ENCODE measurements at regions of chr2 and their contacts with region 1.

Region 1: DNA sequence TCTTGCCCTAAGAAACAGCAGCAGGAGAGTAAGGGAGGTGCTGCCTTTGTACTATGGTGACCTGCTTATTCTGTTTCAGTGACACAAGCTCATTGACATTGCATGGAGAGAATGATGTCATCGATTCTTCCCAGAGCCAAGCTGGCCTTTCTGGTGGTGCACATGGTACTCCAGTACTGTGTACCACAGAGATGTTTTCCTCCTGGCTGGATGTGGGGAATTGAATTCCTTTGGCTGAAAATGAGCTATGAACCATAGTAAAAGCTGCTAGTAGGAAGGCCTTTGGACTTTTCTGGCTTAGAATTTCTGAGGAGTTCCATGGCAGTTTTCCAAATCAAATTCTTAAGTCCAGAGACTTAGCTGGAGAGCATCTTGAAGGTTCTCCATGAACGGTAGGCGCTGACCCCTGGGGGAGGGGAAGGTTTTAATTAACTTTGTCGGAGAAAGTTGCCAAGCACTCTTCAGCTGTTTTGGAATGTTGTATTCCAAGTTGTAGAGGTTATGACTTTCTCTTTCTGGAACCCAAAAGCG is 17.1 kb upstream of the B3GNT2 start:
- DNase-seq: no peak
- H3K4me3 ChIP-seq: no peak overlapping the region
- H3K27ac ChIP-seq: peak overlapping the region; percentile 9
- H3K4me1 ChIP-seq: peaks cover 82% of the 10 kb centered on the region
- CTCF ChIP-seq: no peak

Region 2: DNA sequence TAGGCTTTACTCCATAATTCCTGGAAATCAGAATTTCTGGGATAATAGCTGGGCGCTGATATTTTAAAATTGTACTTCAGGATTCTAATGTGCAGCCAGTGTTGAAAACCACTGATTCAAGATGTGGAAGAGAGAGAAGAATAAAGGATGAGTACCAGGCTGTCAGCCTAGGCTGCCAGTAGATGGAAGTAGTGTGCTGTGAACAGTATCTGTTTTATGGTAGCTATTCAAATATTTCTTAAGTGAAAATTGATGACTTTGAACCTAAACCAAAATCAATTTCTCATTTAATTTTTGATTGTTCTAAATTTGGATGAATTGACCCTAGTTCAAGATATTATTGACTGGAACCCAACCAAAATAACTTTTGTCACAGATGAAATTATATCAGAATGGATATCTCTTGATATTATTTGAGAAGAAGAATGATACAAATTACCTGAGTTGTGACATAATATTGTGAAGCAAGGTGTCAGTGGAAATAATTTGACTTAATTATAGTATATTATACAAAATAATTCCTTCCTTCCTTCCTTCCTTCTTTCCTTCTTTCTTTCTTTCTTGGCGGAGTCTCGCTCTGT is 185.3 kb before region 1 on chr2:
- CTCF ChIA-PET with region 1: no interaction called
- POLR2A ChIA-PET with region 1: interaction called, 3 read pairs
- intact Hi-C with region 1: loop called (anchors 2 kb)
- DNase-seq: peak; percentile 80
- H3K4me3 ChIP-seq: no peak overlapping the region
- H3K27ac ChIP-seq: no peak overlapping the region
- H3K4me1 ChIP-seq: peaks cover 49% of the 10 kb centered on the region
- CTCF ChIP-seq: peak; percentile 99

Region 3: DNA sequence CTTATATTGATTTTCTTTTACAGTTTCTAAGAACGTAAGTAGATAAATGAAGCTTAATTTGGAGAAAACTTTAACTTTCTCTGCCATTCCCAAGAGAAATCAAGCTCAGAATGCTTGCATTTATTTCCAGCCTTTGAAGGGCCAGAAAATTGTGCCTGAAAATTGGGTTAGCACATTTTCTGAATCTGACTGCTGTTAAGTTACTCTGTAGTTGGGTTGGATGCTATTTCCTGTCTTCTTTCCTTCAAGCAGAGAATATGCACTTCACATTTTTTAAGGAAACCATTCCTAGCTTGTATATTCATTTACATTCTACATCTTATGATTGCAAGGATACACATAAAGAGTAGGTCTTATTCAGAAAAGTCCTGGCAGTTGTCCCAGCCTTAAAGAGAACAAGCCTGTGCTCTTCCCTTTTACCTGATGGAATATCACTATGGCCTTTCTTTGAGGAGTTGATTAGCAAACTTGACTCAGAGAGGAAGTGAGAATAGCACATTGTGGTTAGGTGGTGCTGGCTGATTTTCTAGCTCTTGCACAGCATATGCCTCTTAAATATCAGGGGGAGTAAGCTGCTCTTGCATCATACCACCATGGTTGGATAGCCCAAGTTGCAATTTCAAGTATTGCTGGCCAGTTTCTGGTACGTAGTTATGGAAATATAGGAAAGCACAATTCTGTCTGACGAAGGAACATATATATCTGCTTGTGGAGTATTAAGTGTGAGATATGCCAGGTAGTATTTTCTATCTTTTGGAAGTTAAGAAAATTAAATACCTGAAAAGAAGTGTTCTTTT is 139.6 kb before region 1 on chr2:
- CTCF ChIA-PET with region 1: no interaction called
- POLR2A ChIA-PET with region 1: interaction called, 6 read pairs
- intact Hi-C with region 1: loop called (anchors 5 kb)
- DNase-seq: peak; percentile 94
- H3K4me3 ChIP-seq: peak overlapping the region; percentile 39
- H3K27ac ChIP-seq: peak overlapping the region; percentile 89
- H3K4me1 ChIP-seq: peaks cover 32% of the 10 kb centered on the region
- CTCF ChIP-seq: no peak

Region 4: DNA sequence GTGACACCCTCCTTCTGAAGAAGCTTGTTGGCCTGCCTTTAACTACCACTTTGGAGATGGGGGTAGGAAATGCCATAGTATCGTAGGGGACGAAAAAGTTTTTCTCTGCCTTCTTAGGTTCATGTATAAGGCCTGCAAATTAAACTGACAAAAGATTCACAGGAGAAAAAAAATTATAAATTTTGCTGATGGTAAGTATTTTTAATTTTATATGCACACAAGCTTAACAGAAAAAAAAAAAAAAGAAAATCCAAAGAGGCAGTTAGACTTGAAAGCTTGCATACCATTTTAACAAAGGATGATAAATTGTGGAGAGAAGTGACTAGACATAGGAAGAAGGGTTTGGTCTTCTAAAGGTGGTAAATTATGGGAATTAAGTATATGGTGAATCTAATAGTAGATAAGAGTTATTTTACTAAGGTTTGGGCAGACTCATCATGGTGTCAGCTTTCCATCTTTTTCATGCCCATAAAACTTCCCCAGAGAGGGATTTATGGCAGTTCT is 45.4 kb before region 1 on chr2:
- CTCF ChIA-PET with region 1: interaction called, 3 read pairs
- POLR2A ChIA-PET with region 1: interaction called, 10 read pairs
- intact Hi-C with region 1: loop called (anchors 2 kb)
- DNase-seq: no peak
- H3K4me3 ChIP-seq: no peak overlapping the region
- H3K27ac ChIP-seq: no peak overlapping the region
- H3K4me1 ChIP-seq: peaks cover 62% of the 10 kb centered on the region
- CTCF ChIP-seq: no peak

Region 5: GRCh38 chr2:62140426-62141141 is 38.2 kb before region 1 on chr2:
- CTCF ChIA-PET with region 1: no interaction called
- POLR2A ChIA-PET with region 1: interaction called, 6 read pairs
- intact Hi-C with region 1: loop called (anchors 2 kb)
- DNase-seq: peak; percentile 84
- H3K4me3 ChIP-seq: peak overlapping the region; percentile 13
- H3K27ac ChIP-seq: peak overlapping the region; percentile 89
- H3K4me1 ChIP-seq: peaks cover 90% of the 10 kb centered on the region
- CTCF ChIP-seq: no peak

Region 6: DNA sequence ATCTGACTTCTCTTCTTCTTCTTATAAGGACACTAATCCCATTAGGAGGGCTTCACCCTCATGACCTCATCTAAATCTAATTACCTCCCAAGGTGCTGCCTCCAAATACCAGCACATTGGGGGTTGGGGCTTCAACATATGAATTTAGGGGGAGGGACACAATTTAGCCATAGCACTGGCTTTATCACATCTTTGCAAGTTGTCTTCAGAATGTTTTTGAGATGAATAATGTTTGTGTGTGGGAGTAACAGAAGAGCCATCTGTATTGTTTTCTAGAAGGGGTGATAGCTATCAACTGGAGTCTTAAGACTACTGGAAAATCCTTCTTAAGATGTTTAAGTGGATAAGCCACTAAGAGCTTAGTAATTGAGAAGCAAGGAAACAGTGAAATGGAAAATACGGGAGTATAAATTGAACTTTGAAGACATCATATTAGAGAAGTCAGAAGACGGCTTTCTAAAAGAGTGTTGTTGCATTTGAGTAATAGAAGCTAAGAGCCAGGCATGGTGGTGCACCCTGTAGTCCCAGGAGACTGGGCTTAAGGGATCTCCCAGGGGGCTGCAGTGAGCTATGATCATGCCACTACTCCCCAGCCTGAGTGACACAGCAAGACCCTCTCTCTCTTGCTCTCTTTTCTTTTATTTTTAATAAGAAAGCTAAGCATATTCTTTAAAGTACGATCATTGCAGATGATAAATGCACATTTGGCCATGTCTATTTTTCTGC is 15.5 kb before region 1 on chr2:
- CTCF ChIA-PET with region 1: interaction called, 3 read pairs
- POLR2A ChIA-PET with region 1: interaction called, 31 read pairs
- intact Hi-C with region 1: no loop called
- DNase-seq: no peak
- H3K4me3 ChIP-seq: no peak overlapping the region
- H3K27ac ChIP-seq: no peak overlapping the region
- H3K4me1 ChIP-seq: peaks cover 44% of the 10 kb centered on the region
- CTCF ChIP-seq: no peak

Region 7: DNA sequence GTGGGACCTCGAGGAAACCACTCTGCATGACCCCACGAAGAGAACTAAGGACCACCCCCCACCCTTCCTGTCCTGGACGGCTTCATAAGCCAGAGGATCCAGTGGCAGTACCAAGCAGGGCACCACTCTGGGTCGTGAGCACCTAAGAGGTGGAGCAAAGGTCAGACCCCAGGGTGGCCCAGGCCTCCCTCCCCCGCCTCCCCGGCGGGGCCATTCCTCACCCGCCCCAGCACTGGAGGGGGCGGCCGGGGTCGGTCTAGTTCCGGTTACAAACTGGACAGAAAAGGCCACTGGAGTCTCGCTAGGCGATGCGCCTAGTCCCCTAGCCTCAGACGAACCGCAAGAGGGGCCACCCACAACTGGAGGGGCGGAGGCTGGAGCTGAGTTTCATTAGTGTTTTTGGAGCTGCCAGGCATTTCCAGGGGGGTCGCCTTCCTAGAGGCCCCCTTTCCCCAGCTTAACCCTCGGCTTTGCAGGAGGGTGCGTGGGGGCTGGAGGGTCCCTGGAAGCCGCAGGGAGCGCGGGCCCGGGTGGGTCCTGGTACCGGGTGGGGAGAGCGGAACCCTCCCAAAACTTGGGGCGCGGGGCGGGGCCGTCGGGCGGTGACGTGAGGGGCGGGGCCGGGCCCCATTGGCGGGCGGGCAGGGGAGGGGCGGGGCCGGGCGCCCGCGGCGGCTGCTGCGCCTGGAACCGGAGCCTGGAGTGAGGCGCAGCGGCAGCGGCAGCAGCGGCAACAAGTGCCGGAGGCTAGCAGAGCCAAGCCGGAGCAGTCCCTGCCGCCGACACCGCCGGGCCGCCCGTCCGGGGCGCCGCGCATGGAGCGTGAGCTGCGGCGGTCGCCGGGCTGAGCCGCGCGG is 16.8 kb after region 1 on chr2 and contains the start of gene B3GNT2:
- CTCF ChIA-PET with region 1: interaction called, 6 read pairs
- POLR2A ChIA-PET with region 1: interaction called, 7 read pairs
- intact Hi-C with region 1: loop called (anchors 1 kb)
- DNase-seq: peak; percentile 89
- H3K4me3 ChIP-seq: peak within 1 kb of the TSS; percentile 95
- H3K27ac ChIP-seq: peak within 1 kb of the TSS; percentile 75
- H3K4me1 ChIP-seq: peaks cover 58% of the 10 kb centered on the region
- CTCF ChIP-seq: no peak
- total RNA-seq, gene B3GNT2: 63.0 and 65.8 TPM in 2 replicates

Region 8: DNA sequence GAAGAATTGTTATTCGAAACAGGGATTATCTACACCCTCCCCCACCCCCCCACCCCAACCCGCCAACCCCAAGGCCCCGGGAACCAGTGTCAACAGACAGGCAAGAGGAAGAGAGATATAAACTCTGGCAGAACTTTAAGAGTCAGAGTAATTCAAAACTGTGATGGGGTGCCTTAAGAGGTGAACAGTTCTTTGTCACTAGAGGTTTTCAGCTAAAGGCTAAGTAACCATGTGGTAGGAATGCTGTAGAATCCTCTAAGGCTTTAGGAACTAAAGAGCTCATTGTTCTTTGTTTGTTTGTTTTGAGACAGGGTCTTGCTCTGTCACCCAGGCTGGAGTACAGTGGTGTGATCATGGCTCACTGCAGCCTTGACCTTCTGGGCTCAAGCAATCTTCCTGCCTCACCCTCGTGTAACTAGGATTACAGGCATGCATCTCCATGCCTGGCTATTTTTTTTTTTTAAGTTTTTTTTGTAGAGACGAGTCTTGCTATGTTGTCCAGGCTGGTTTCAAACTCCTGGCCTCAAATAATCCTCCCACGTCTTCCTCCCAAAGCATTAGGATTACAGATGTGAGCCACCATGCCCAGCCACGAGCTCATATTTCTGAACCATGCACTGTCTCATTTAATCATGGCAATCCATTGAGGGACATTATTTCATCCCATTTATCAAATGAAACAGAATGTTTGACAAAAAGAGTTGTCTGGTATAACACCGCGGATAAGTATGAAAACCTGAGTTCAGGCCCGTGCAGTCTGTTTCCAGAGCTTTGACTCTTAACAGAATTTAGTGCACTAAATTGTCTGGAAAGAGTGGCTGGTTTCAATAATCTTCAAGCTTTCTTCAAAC is 347.9 kb after region 1 on chr2:
- CTCF ChIA-PET with region 1: no interaction called
- POLR2A ChIA-PET with region 1: no interaction called
- intact Hi-C with region 1: no loop called
- DNase-seq: no peak
- H3K4me3 ChIP-seq: no peak overlapping the region
- H3K27ac ChIP-seq: no peak overlapping the region
- H3K4me1 ChIP-seq: no peaks in the 10 kb centered on the region
- CTCF ChIP-seq: no peak

Measured in OCI-LY7 (cell line).